ENCODE measurements at regions of chr5 and their contacts with region 1.

Region 1: DNA sequence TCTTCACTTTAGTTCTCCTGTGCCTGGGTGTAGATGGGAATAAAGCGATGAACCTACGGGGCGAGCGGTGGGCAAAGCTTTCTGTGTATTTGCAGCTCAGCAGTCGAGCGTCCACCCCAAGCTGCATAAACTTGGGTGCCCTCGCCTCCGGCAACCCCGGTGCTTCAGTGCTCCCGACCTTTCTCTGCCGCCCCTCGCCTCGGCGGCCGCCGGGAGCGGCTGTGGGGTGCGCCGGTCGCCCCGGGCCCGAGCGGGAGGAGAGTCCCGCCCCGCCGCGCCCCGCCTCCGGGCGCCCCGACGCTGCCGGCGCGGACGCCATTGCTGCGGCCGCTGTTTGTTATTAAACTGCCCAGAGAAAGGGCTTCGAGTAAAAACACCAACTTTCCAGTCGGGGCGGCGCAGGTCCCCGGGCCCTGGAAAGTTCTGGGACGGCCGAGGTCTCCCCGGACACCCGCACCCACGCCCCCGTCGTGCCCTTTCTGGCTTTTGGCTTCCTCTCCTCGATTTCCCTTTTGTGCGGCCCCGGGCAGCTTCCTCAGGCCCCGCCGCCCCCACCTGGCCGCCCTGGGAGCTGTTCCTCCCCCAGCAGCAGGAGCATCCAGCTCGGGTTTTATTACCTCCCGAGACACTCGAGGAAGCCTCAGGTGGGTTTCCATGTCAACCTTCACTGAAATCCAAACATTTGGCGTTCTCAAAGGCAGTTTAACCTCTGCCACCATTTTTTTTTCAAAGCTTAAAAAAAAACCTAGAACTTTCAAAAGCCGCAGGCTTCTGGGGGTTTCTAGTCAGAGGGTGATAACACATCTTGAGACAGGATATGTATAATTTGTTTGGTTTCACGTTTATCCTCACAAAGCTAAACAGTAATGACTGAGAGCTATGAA is 334.3 kb downstream of the CWC27 start:
- DNase-seq: peak; percentile 77 to 91 (median 88)
- H3K4me3 ChIP-seq: peak overlapping the region; percentile 49 to 76 (median 68)
- H3K27ac ChIP-seq: peak overlapping the region; percentile 64 to 82
- H3K4me1 ChIP-seq: peaks cover 6 to 16% (median 9%) of the 10 kb centered on the region in 4 experiments
- H3K27me3 ChIP-seq: no peaks in the 10 kb centered on the region

Region 2: DNA sequence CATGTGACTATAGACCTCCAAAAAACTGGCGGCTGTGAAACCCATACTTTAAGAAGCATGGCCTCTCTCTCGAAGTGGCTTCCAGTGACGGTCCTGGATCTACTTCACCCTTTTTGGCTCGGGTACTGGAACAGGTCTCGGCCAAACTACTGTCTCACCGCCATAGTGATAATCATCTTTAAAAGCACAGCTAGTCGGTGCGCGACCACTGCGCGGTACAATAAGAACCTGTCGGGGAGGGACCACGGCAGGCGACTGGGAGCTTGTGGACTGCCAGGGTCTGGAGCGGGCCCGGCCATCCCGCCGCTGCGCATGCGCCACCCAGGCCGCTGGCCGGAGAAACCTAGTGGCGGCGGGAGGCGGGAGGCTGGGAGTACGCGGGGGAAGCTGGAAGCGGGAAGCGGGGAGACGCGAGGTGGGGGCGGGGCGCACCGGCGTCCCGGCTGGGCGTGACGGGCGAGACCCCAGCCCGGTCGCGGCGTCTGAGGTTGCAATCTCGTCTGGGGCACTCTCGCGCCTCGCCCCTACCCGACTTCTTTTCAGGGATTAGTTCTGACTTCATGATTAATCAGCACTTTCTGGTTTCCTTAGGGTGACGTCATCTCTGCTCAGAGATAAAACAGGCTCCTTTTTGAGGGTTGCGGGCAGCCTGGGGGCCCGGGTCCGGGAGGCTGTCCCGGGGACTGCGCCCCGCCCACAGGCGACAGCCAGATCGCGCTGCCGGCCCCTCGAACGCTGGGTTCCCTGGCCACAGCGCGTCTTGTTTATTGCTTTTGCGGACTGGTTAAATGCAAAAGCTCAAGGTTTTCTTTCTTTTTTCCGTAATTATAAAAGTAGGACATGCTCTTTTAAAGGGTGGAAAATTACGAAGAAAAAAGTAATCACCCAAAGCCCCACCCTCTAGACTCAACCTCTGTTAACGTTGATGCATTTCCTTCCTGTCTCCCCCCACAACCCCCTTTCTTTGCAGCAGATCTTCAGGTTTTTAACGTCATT is 67.6 kb before region 1 on chr5:
- CTCF ChIA-PET with region 1: interaction called, 3 read pairs
- POLR2A ChIA-PET with region 1: interaction called, 10 read pairs
- DNase-seq: peak; percentile 95 to 97 (median 97)
- H3K4me3 ChIP-seq: peak overlapping the region; percentile 42 to 84 (median 69)
- H3K27ac ChIP-seq: peak overlapping the region; percentile 55 to 85
- H3K4me1 ChIP-seq: peaks cover 8 to 25% (median 14%) of the 10 kb centered on the region in 4 experiments
- H3K27me3 ChIP-seq: no peaks in the 10 kb centered on the region

Region 3: GRCh38 chr5:66633795-66634194 is 1530.7 kb after region 1 on chr5:
- CTCF ChIA-PET with region 1: no interaction called
- POLR2A ChIA-PET with region 1: no interaction called
- DNase-seq: no peak
- H3K4me3 ChIP-seq: no peak overlapping the region
- H3K27ac ChIP-seq: no peak overlapping the region
- H3K4me1 ChIP-seq: no peaks in the 10 kb centered on the region
- H3K27me3 ChIP-seq: no peaks in the 10 kb centered on the region

Measured in common myeloid progenitor, CD34-positive (primary cell).